ENCODE measurements at regions of chr12 and their contacts with region 1.

Region 1: DNA sequence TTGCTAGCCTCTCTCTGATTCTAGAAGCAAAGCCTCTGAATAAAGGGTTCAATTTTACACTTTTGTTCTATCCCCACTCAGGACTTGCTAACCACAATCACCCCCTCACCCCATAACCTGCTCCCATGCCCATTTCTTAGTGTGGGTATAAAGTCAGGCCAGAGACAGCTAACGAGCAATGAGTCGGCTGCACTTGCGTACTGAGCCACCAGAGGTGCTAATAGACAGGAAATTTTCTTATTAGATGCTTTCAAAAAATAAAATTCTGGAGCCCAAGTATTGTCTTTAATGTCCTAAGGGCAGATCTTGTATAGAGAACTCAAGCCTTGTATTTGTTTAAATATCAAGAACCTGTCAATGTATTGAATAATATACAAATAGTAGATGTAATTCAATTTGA is 256.9 kb downstream of the SYT1 start:
- DNase-seq: peak; percentile 18
- ATAC-seq: no peak
- H3K4me3 ChIP-seq: no peak overlapping the region
- H3K27ac ChIP-seq: no peak overlapping the region
- H3K4me1 ChIP-seq: no peaks in the 10 kb centered on the region
- H3K27me3 ChIP-seq: no peaks in the 10 kb centered on the region
- CTCF ChIP-seq: peak; percentile 59

Region 2: GRCh38 chr12:79344855-79345847 is 223.7 kb after region 1 on chr12:
- CTCF ChIA-PET with region 1: interaction called, 6 read pairs
- POLR2A ChIA-PET with region 1: no interaction called
- intact Hi-C with region 1: loop called (anchors 1 kb)
- DNase-seq: peak; percentile 77
- ATAC-seq: peak; percentile 99
- H3K4me3 ChIP-seq: no peak overlapping the region
- H3K27ac ChIP-seq: no peak overlapping the region
- H3K4me1 ChIP-seq: no peaks in the 10 kb centered on the region
- H3K27me3 ChIP-seq: peaks cover 4% of the 10 kb centered on the region; the same call in 1 of the 2 replicates
- CTCF ChIP-seq: peak; percentile 91